Activated naive CD4-positive, alpha-beta T cell treated with anti-CD3 and anti-CD28 coated beads for 36 hours (primary cell): ENCODE measurements at regions of chr19 and their contacts with region 1.

Region 1: GRCh38 chr19:19900729-19901444 is at the start of gene ZNF93:
- DNase-seq: peak; percentile 98
- H3K4me3 Mint-ChIP-seq: peak within 1 kb of the TSS; percentile 97
- H3K27ac Mint-ChIP-seq: peak within 1 kb of the TSS; percentile 95
- H3K4me1 Mint-ChIP-seq: peaks cover 28% of the 10 kb centered on the region
- H3K27me3 Mint-ChIP-seq: no peaks in the 10 kb centered on the region
- total RNA-seq, gene ZNF93: 15.2 to 16.6 TPM

Region 2: DNA sequence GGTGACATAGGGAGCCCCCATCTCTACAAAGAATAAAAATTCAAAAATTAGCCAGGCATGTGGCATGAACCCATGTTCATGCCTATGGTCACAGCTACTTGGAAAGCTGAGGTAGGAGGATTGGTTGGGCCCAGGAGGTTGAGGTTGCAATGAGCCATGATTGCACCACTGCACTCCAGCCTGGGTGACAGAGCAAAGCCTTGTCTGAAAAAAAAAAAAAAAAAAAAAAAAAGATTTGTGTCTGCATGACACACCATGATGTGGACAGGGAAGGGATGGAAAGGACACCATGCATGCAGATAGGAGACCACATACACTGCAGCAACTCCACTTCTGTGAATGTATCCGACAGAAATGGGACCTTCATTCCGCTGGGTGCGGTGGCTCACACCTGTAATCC is 925.9 kb before region 1 on chr19:
- CTCF ChIA-PET with region 1: no interaction called
- intact Hi-C with region 1: no loop called
- DNase-seq: no peak
- H3K4me3 Mint-ChIP-seq: no peak overlapping the region
- H3K27ac Mint-ChIP-seq: no peak overlapping the region
- H3K4me1 Mint-ChIP-seq: no peaks in the 10 kb centered on the region
- H3K27me3 Mint-ChIP-seq: no peaks in the 10 kb centered on the region

Region 3: GRCh38 chr19:19652456-19653295 is 248.2 kb before region 1 on chr19:
- CTCF ChIA-PET with region 1: no interaction called
- intact Hi-C with region 1: no loop called
- DNase-seq: no peak
- H3K4me3 Mint-ChIP-seq: no peak overlapping the region
- H3K27ac Mint-ChIP-seq: no peak overlapping the region
- H3K4me1 Mint-ChIP-seq: no peaks in the 10 kb centered on the region
- H3K27me3 Mint-ChIP-seq: no peaks in the 10 kb centered on the region

Region 4: DNA sequence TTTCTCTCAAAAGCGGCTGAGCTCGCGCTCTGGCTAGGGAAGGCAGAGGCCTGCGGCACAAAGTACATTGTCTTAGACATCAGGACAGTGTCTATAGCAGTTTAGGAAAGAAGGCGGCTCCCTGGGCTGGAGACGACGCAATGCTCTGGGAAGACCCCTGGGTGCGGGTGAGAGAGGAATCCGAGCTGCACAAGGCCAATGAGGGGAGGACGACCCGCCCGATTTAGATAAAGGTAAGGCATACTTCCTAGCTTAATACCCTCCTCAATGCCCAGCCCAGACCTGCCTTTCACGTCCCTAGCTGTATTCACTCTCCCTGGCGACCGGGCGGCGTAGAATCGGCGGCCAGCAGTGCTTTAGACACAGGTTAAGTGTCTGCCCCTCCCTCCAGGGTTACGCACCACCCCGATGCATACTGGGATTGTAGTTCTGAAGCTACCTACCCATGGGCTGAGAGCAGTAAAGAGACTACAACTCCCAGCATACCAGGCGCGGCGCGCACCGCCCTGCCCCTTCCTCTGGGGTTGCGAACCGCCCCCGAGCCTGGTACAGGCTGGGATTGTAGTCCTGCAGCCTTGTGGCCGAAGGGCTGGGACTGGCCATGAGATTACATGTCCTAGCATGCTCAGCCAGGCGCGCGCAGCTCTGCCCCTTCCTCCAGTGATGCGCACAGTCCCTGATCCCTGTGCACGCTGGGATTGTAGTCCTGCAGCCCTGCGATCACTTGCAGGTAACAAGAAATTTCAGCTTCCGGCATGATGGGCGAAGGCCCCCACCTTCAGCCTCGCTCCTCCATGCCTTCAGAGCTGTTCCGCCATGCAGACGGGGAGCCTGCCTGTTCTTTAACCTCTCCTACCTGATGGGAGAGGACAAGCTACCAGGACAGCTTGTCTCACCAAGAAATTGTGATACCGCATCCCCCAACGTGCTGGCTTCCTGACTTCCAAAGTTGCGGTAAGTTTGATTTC is 124.6 kb before region 1 on chr19:
- CTCF ChIA-PET with region 1: interaction called, 4 read pairs
- intact Hi-C with region 1: loop called (anchors 1 kb)
- DNase-seq: peak; percentile 95
- H3K4me3 Mint-ChIP-seq: peak overlapping the region; percentile 90
- H3K27ac Mint-ChIP-seq: peak overlapping the region; percentile 90
- H3K4me1 Mint-ChIP-seq: peaks cover 44% of the 10 kb centered on the region
- H3K27me3 Mint-ChIP-seq: no peaks in the 10 kb centered on the region

Region 5: DNA sequence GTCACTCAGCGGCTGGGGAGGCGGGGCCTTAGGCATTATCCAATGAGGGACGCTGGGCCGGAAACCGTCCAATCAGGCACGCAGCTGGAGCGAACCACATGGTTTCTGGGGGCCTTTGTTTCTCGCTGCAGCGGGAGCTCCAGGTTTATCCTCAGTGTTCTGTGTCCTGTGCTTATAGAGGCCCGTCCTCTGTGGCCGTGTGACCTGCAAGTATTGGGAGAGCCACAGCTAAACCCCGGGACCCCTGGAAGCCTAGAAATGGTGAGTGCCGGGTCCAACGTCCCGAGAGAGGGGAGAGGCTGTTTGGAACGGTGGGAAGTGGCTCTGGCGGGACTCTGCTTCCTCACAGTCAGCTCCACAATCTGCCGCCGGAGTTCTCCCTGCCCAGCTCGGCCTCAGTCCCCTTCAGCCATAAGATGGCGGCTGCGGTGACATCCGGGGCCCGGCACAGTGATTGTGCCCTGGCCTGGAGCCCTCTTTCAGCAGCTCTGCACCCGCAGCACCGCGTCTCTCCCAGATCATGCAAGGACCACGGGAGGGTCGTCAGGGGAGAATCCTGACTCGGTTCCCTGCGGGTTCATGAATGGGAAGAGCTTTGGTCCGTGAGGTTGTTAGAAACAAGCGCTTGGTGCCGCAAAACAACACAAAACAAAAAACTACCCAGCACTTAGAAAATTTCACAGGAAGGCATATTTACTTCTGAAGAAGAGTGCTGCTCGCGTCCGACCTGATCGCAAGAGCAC is 35.0 kb before region 1 on chr19 and contains the start of gene ZNF253:
- CTCF ChIA-PET with region 1: interaction called, 5 read pairs
- intact Hi-C with region 1: loop called (anchors 1 kb)
- DNase-seq: peak; percentile 99
- H3K4me3 Mint-ChIP-seq: peak within 1 kb of the TSS; percentile 100
- H3K27ac Mint-ChIP-seq: peak within 1 kb of the TSS; percentile 99
- H3K4me1 Mint-ChIP-seq: peaks cover 26% of the 10 kb centered on the region
- H3K27me3 Mint-ChIP-seq: no peaks in the 10 kb centered on the region
- total RNA-seq, gene ZNF253: 6.1 to 9.6 TPM

Region 6: DNA sequence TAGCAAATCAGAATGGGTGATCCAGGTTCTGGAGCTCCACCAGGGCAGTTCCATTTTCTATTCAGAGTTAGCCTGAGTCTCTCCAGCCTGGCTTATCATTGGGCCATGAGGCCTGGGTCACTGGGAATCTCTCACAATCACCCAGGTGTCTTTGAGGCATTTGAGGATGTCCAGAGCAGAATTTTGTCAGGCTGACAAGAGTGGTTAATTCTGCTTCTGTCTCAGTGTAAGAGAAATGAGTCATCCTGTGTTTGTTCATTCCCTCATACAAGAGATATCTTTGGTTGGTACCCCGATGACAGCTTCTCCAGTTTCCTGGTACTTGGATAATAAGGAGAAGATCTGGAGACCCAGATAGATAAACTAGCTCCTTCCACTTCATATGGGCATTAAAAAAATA is 10.3 kb after region 1 on chr19:
- CTCF ChIA-PET with region 1: no interaction called
- intact Hi-C with region 1: no loop called
- DNase-seq: no peak
- H3K4me3 Mint-ChIP-seq: no peak overlapping the region
- H3K27ac Mint-ChIP-seq: no peak overlapping the region
- H3K4me1 Mint-ChIP-seq: peaks cover 32% of the 10 kb centered on the region
- H3K27me3 Mint-ChIP-seq: no peaks in the 10 kb centered on the region

Region 7: DNA sequence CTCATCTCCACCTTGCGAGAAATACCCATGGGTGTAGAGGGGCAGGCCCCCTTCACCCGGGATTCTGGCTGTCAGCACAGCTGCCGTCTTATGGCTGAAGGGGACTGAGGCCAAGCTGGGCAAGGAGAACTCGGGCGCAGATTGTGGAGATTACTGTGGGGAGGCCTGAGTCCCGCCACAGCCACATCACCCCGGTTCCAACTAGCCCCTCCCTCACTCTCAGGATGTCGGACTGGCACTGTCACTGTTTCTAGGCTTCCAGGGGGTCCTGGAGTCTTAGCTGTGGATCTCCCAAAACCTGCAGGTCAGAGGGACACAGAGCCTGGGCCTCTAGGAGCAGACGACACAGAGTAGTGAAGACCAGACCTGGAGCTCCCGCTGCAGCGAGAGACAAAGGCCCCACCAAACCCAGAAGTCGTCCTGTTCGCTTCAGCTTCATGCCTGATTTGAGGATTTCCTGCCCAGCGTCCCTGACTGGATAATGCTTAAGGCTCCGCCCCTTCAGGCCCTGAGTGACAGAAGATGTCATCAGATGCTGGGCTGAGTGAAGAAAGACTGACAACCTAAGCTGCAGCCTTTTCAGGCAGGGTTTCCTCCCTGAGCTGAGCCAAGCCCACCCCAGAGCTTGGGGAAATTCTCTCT is 55.7 kb after region 1 on chr19:
- CTCF ChIA-PET with region 1: no interaction called
- intact Hi-C with region 1: loop called (anchors 1 kb)
- DNase-seq: peak; percentile 9
- H3K4me3 Mint-ChIP-seq: no peak overlapping the region
- H3K27ac Mint-ChIP-seq: no peak overlapping the region
- H3K4me1 Mint-ChIP-seq: no peaks in the 10 kb centered on the region
- H3K27me3 Mint-ChIP-seq: no peaks in the 10 kb centered on the region

Region 8: DNA sequence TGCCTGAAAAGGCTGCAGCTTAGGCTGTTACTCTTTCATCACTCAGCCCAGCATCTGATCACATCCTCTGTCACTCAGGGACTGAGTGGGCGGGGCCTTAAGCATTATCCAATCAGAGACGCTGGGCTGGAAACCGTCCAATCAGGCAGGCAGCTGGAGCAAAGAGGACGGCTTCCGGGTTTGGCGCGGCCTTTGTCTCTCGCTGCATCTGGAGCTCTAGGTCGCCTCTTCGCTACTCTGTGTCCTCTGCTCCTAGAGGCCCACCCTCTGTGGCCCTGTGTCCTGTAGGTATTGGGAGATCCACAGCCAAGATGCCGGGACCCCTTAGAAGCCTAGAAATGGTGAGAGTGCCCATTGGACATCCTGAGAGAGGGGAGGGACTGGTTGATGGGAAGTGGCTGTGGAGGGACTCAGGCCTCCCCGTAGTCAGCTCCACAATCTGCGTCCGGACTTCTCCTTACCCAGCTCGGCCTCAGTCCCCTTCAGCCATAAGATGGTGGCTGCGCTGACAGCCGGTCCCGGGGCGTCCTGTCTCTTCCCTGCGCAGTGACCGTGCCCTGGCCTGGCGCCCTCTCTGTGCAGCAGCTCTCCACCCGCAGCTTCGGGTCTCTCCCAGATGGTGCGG is 266.2 kb after region 1 on chr19 and contains the start of gene ZNF486:
- CTCF ChIA-PET with region 1: no interaction called
- intact Hi-C with region 1: loop called (anchors 10 kb)
- DNase-seq: peak; percentile 98
- H3K4me3 Mint-ChIP-seq: peak within 1 kb of the TSS; percentile 98
- H3K27ac Mint-ChIP-seq: peak within 1 kb of the TSS; percentile 91
- H3K4me1 Mint-ChIP-seq: peaks cover 19% of the 10 kb centered on the region
- H3K27me3 Mint-ChIP-seq: no peaks in the 10 kb centered on the region
- total RNA-seq, gene ZNF486: 11.3 to 13.2 TPM